ENCODE measurements at regions of chr9 and their contacts with region 1.

Region 1: DNA sequence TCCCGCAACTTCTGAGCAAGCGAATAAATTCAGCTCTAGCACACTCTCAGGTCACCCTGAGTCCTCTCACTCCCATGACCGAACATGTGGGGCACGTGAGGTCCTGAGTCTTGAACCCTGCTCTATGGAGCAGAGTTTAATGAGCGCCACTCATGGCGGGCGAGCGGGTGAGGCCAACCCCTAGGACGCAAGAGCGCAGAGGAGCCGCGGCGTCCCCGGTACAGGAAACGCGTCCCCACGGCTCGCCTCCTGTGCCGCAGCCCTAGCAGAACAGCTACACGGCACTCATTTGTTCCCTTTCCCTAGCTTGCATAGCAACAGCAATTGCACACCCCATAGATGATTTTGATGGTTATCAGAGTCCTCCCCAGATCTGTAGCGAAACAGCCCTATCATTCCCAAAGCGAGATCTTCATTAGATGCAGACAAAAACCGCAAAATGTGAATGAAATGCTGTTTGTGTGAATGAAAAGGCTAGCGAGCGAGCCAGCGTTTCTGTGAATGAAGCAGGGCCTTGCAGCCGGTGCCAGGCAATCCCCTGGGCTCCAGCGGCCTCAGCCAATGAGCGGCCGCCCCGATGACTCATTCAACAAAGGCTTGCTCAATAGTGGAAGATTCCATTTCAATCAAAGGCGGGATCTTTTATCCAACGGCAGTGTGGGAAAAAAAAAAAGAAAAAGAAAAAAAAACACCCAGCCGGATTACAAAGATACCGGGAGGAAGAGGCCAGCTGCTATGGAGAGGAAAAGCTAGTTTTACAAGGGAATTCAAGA is 1.5 kb upstream of the SHC3 start:
- DNase-seq: peak; percentile 96

Region 2: GRCh38 chr9:89021154-89021803 is 158.8 kb before region 1 on chr9:
- intact Hi-C with region 1: loop called in 1 of 2 experiments (anchors 10 kb)
- DNase-seq: no peak

Region 3: DNA sequence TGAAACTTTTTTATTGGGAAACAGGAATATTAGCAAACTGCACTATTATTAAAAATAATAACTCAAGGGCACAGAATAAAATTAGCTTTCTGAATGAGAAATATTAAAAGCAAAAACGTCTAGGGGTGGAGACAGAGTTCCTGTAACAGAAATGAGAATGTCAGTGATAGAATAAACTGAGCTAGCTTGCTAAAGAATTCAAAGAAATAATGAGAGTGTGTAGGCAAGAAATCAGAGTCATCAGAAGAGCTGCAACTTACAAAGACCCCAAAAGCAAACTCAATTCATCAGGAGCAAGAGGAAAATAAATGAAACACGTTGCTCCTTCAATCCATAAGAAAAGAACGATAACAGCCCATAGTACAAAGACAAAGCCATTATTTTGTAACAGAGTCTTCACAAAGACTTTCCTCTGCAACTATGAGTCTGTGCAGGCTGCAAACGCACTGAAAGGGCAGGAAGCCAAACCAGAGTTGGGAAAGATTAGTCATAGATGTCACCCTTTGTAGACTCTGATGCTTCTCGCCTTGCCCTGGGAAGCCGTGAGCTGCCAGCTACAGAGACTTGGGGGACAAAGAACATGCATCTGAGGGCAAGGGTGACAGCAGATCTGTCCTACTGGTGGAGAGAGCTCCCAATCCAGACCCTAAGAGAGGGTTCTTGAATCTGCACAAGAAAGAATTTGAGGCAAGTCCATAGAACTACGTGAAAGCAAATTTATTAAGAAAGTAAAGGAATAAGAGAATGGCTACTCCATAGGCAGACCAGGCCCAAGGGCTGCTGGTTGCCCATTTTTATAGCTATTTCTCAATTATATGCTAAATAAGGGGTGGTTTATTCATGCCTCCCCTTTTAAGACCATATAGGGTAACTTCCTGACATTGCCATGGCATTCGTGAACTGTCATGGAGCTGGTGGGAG is 42.3 kb before region 1 on chr9:
- intact Hi-C with region 1: no loop called
- DNase-seq: peak; percentile 90

Measured in posterior vena cava (tissue), 2 donors.